ENCODE measurements at regions of chr10 and their contacts with region 1.

Region 1: DNA sequence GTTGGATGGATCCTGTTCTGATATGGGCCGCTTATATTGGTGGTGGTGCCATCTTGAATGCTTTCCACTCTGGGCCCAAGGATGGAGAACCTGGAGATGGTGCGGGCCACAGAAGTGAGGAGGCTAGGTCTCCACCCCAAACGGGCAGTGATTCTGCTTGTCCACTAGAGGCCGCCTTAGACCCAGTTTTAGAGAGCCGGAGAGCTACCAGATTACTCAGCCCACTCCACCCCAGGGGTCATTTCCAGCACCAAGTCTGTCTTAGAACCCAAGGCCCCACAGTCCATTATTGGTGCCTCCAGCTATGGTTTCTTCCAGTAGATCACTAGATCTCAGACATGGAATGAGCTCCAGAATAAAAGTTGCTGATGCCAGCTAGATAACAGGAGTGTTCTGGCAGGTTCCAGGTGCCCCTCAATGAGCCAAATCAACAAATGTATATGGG is 11.8 kb upstream of the CAMK2G start:
- DNase-seq: peak in 1 of 2 donors; percentile 87
- H3K4me3 ChIP-seq: no peak overlapping the region
- H3K27ac ChIP-seq: peak overlapping the region; percentile 86 to 91
- H3K4me1 ChIP-seq: peaks cover 19 to 38% of the 10 kb centered on the region in 2 donors
- H3K27me3 ChIP-seq: no peaks in the 10 kb centered on the region
- CTCF ChIP-seq: peak; percentile 75 to 94 (median 89)

Region 2: DNA sequence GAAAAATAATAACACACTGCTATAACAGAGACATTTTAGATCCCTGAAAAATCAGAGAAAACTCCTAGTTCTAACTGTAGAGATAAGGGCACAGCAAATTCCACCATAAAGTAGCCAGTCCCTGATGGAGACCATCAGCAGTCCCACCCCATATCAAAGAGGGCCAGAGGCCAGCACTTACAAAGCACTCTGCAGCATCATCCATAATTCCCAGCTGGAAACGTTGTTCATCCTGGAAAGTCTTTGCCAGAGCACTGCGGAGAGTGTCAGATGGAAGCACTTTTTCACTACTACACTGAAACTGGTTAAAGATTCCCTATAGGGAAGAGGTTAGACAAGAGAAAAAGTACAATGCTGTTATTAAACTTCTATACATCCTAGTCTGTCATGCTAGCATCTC is 340.8 kb before region 1 on chr10:
- intact Hi-C with region 1: no loop called
- DNase-seq: no peak
- H3K4me3 ChIP-seq: no peak overlapping the region
- H3K27ac ChIP-seq: no peak overlapping the region
- H3K4me1 ChIP-seq: no peaks in the 10 kb centered on the region
- H3K27me3 ChIP-seq: no peaks in the 10 kb centered on the region
- CTCF ChIP-seq: no peak

Region 3: GRCh38 chr10:73908853-73909538 is 22.9 kb after region 1 on chr10:
- intact Hi-C with region 1: loop called (anchors 1 kb)
- DNase-seq: peak in 1 of 2 donors; percentile 80
- H3K4me3 ChIP-seq: no peak overlapping the region
- H3K27ac ChIP-seq: peak overlapping the region; percentile 5 to 22
- H3K4me1 ChIP-seq: peaks cover 0 to 35% of the 10 kb centered on the region in 2 donors
- H3K27me3 ChIP-seq: no peaks in the 10 kb centered on the region
- CTCF ChIP-seq: no peak

Region 4: GRCh38 chr10:73956476-73957359 is 70.6 kb after region 1 on chr10:
- intact Hi-C with region 1: loop called (anchors 5 kb)
- DNase-seq: peak in 1 of 2 donors; percentile 64
- H3K4me3 ChIP-seq: no peak overlapping the region
- H3K27ac ChIP-seq: peak overlapping the region; percentile 66 to 74
- H3K4me1 ChIP-seq: peaks cover 0 to 10% of the 10 kb centered on the region in 2 donors
- H3K27me3 ChIP-seq: no peaks in the 10 kb centered on the region
- CTCF ChIP-seq: no peak

Region 5: GRCh38 chr10:73997787-73998622 is 111.9 kb after region 1 on chr10 and contains the start of gene VCL:
- intact Hi-C with region 1: loop called (anchors 2 kb)
- DNase-seq: peak; percentile 93 to 99
- H3K4me3 ChIP-seq: peak within 1 kb of the TSS; percentile 87 to 91
- H3K27ac ChIP-seq: peak within 1 kb of the TSS; percentile 95
- H3K4me1 ChIP-seq: peaks cover 0 to 16% of the 10 kb centered on the region in 2 donors
- H3K27me3 ChIP-seq: no peaks in the 10 kb centered on the region
- CTCF ChIP-seq: no peak
- total RNA-seq, gene VCL: 333 TPM

Region 6: GRCh38 chr10:74151056-74151878 is 265.2 kb after region 1 on chr10 and contains the start of gene ADK:
- intact Hi-C with region 1: loop called (anchors 5 kb)
- DNase-seq: peak; percentile 98 to 100
- H3K4me3 ChIP-seq: peak within 1 kb of the TSS; percentile 82 to 96
- H3K27ac ChIP-seq: peak within 1 kb of the TSS; percentile 84
- H3K4me1 ChIP-seq: peaks cover 8 to 29% of the 10 kb centered on the region in 2 donors
- H3K27me3 ChIP-seq: no peaks in the 10 kb centered on the region
- CTCF ChIP-seq: peak; percentile 24 to 63 (median 41)
- total RNA-seq, gene ADK: 2.4 TPM

Region 7: GRCh38 chr10:74213571-74214162 is 327.6 kb after region 1 on chr10:
- intact Hi-C with region 1: no loop called
- DNase-seq: no peak
- H3K4me3 ChIP-seq: no peak overlapping the region
- H3K27ac ChIP-seq: no peak overlapping the region
- H3K4me1 ChIP-seq: no peaks in the 10 kb centered on the region
- H3K27me3 ChIP-seq: no peaks in the 10 kb centered on the region
- CTCF ChIP-seq: peak in 2 of 3 experiments; percentile 17 to 47